CD14-positive monocyte (primary cell): ENCODE measurements at regions of chr19 and their contacts with region 1.

Region 1: GRCh38 chr19:55041617-55042349 is 3.7 kb upstream of the GP6 start:
- DNase-seq: peak; percentile 5 to 47 (median 23)
- H3K4me3 ChIP-seq: no peak overlapping the region
- H3K4me3 Mint-ChIP-seq: peak overlapping the region in 1 of 2 donors; percentile 71
- H3K27ac ChIP-seq: no peak overlapping the region
- H3K27ac Mint-ChIP-seq: peak overlapping the region in 5 of 7 donors; percentile 15 to 75 (median 34)
- H3K4me1 ChIP-seq: peaks cover 9 to 15% of the 10 kb centered on the region in 2 donors
- H3K4me1 Mint-ChIP-seq: peaks cover 15% of the 10 kb centered on the region
- H3K27me3 ChIP-seq: peaks cover 2 to 26% of the 10 kb centered on the region in 2 donors
- H3K27me3 Mint-ChIP-seq: peaks cover 23 to 40% (median 30%) of the 10 kb centered on the region in 3 donors
- CTCF ChIP-seq: no peak

Region 2: DNA sequence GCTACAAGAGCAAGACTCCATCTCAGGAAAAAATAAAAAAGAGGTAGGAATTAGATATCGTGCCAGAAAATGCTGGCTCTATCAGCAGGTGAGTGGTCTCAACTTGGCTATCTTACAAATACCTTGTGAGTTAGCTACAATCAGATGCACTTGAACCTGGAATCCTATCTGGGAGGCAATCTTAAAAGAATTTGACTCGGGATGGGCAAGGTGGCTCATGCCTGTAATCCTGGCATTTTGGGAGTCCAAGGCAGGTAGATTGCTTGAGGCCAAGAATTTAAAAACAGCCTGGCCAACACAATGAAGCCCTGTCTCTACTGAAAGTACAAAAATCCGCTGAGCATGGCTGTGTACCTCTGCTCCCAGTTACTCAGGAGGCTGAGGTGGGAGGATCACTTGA is 46.2 kb before region 1 on chr19:
- intact Hi-C with region 1: loop called in 1 of 2 experiments (anchors 10 kb)
- DNase-seq: no peak
- H3K4me3 ChIP-seq: no peak overlapping the region
- H3K4me3 Mint-ChIP-seq: no peak overlapping the region
- H3K27ac ChIP-seq: no peak overlapping the region
- H3K27ac Mint-ChIP-seq: peak overlapping the region in 1 of 7 donors; percentile 52
- H3K4me1 ChIP-seq: no peaks in the 10 kb centered on the region
- H3K4me1 Mint-ChIP-seq: no peaks in the 10 kb centered on the region
- H3K27me3 ChIP-seq: no peaks in the 10 kb centered on the region
- H3K27me3 Mint-ChIP-seq: peaks cover 1 to 17% (median 10%) of the 10 kb centered on the region in 3 donors
- CTCF ChIP-seq: no peak